Caco-2 (cell line): ENCODE measurements at regions of chr7 and their contacts with region 1.

Region 1: DNA sequence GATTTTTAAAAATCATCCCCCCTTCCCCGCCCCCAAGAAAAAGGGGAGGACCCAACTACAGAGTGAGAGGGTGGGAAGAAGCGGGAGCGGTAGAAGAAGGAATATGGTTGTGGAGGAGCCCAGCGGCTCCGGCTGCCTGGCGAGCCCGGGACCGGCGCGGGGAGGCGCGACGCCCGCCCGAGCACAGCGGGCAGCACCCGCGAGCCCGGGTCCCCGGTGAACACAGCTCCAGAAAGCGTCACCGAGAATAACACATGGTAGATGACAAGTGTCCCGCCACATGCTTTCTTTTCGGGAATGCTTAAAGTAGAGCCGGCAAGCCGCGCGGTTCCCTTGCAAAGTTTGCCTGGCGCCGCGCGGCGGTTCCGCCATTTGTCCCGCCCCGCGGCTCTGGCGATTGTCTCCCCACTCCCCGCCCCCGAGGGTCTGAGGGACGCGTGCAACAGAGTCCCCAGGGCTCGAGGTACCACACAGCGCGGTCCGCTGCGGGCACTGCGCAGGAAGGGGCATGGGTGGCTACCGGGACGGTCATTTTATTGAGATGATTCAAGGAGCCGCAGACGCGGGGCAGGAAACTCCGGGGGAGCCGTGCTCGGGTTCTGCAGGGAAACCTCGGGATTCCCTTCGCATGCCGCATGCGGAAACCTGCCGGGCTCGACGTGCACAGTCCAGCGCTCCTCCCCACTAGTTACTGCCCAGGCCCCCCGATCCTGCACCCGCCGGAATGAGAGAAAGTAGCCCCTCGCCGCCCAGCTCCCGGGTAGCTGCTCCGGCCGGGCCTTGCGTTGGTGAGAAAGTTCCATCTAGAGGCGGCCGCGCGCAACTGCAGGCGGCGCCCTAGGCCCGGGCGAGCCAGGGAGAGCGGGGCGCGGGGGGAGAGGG is 781 bp upstream of the GRM8 start:
- DNase-seq: peak; percentile 45 to 73
- H3K4me3 ChIP-seq: peak overlapping the region; percentile 51
- H3K4me3 Mint-ChIP-seq: peak overlapping the region; percentile 61
- H3K27ac Mint-ChIP-seq: no peak overlapping the region
- H3K4me1 ChIP-seq: peaks cover 8% of the 10 kb centered on the region; the same call in 1 of the 2 replicates
- H3K4me1 Mint-ChIP-seq: no peaks in the 10 kb centered on the region
- H3K27me3 ChIP-seq: peaks cover 12% of the 10 kb centered on the region
- H3K27me3 Mint-ChIP-seq: peaks cover 39% of the 10 kb centered on the region
- CTCF ChIP-seq: peak; percentile 87 to 88

Region 2: GRCh38 chr7:126856691-126857291 is 396.7 kb before region 1 on chr7:
- CTCF ChIA-PET with region 1: no interaction called
- POLR2A ChIA-PET with region 1: no interaction called
- intact Hi-C with region 1: loop called (anchors 2 kb)
- DNase-seq: peak in 1 of 2 experiments; percentile 12
- H3K4me3 ChIP-seq: no peak overlapping the region
- H3K4me3 Mint-ChIP-seq: no peak overlapping the region
- H3K27ac Mint-ChIP-seq: no peak overlapping the region
- H3K4me1 ChIP-seq: no peaks in the 10 kb centered on the region
- H3K4me1 Mint-ChIP-seq: no peaks in the 10 kb centered on the region
- H3K27me3 ChIP-seq: no peaks in the 10 kb centered on the region; the same call in 1 of the 2 replicates
- H3K27me3 Mint-ChIP-seq: peaks cover 6% of the 10 kb centered on the region
- CTCF ChIP-seq: peak; percentile 56 to 60

Region 3: DNA sequence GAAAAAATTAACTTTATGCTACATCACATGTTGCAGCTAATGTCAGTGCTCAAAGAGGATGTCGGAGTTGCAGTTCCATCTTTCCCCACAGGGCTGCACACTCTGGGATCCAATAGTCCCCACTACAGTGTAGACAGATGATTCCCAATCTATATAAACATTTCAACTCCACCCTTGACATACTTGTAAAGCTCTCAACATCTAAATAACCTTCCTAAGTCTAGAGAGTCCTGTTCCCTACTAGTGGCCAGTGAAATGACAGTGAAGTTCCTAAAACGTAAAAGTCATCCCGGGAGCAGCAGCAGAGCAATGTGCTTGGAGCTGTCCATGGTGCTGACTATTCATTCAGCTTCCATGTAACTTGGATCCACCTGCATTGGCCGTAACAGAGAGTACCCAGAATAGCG is 145.9 kb before region 1 on chr7:
- CTCF ChIA-PET with region 1: interaction called, 9 read pairs
- POLR2A ChIA-PET with region 1: no interaction called
- intact Hi-C with region 1: loop called (anchors 1 kb)
- DNase-seq: peak; percentile 62 to 76
- H3K4me3 ChIP-seq: no peak overlapping the region
- H3K4me3 Mint-ChIP-seq: no peak overlapping the region
- H3K27ac Mint-ChIP-seq: no peak overlapping the region
- H3K4me1 ChIP-seq: no peaks in the 10 kb centered on the region
- H3K4me1 Mint-ChIP-seq: no peaks in the 10 kb centered on the region
- H3K27me3 ChIP-seq: no peaks in the 10 kb centered on the region
- H3K27me3 Mint-ChIP-seq: peaks cover 6% of the 10 kb centered on the region
- CTCF ChIP-seq: peak; percentile 33 to 75

Region 4: DNA sequence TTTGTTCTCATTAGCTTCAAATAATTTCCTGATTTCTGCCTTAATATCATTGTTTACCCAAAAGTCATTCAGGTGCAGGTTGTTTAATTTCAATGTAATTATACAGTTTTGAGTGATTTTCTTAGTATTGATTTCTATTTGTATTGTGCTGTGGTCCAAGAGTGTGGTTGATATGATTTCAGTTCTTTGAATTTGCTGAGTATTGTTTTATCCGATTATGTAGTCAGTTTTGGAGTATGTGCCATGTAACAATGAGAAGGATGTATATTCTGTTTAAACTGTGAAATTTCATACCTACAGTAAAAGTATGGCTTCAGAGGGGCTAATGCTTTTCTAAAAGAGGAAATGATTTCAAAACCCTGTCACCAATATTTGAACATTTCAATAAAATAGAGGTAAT is 16.6 kb after region 1 on chr7:
- CTCF ChIA-PET with region 1: no interaction called
- POLR2A ChIA-PET with region 1: no interaction called
- intact Hi-C with region 1: no loop called
- DNase-seq: no peak
- H3K4me3 ChIP-seq: no peak overlapping the region
- H3K4me3 Mint-ChIP-seq: no peak overlapping the region
- H3K27ac Mint-ChIP-seq: no peak overlapping the region
- H3K4me1 ChIP-seq: no peaks in the 10 kb centered on the region
- H3K4me1 Mint-ChIP-seq: no peaks in the 10 kb centered on the region
- H3K27me3 ChIP-seq: no peaks in the 10 kb centered on the region
- H3K27me3 Mint-ChIP-seq: peaks cover 23% of the 10 kb centered on the region
- CTCF ChIP-seq: no peak

Region 5: GRCh38 chr7:127392566-127393367 is 139.2 kb after region 1 on chr7 and contains the start of gene ZNF800:
- CTCF ChIA-PET with region 1: no interaction called
- POLR2A ChIA-PET with region 1: no interaction called
- intact Hi-C with region 1: no loop called
- DNase-seq: peak; percentile 89 to 92
- H3K4me3 ChIP-seq: peak within 1 kb of the TSS; percentile 73
- H3K4me3 Mint-ChIP-seq: peak within 1 kb of the TSS; percentile 97
- H3K27ac Mint-ChIP-seq: peak within 1 kb of the TSS; percentile 93
- H3K4me1 ChIP-seq: no peaks in the 10 kb centered on the region
- H3K4me1 Mint-ChIP-seq: peaks cover 7% of the 10 kb centered on the region
- H3K27me3 ChIP-seq: no peaks in the 10 kb centered on the region
- H3K27me3 Mint-ChIP-seq: peaks cover 8% of the 10 kb centered on the region
- CTCF ChIP-seq: no peak
- total RNA-seq, gene ZNF800: 17.3 and 18.7 TPM in 2 replicates

Region 6: DNA sequence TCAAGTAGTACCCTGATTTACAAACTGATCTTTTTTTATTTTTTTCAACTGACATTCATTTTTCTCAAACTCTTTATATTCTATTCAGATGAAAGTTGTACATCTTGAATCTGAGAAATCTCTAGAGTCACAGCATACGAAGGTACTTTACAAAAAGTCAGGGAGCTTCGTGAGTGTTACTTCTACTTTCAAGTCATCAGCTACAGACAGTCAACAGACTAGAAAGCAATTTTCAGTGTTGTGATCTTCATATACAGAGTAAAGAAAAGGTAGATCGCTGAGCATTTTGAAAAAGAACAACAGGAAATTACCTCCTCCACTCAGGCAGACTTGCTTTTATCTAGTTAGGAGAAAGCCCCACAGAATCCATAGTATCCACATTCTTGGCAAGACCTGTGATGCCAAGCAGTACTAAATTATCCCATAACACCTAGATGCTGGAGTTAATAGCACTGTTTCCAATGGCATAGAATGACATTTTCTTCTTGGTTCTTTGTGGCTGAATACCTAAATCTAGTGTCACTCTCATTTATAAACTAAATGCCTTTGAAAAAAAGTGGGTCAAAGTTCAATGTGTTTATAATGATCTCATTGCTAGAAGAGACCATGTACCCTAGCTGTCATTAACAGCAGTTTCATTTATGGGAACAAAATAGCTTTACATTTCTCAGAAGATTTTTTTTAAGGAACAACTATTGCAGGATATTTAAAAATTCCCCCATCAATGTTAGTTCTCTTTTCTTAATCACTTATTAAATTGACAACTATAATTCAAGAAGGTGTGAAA is 151.0 kb after region 1 on chr7:
- CTCF ChIA-PET with region 1: no interaction called
- POLR2A ChIA-PET with region 1: no interaction called
- intact Hi-C with region 1: loop called (anchors 5 kb)
- DNase-seq: no peak
- H3K4me3 ChIP-seq: no peak overlapping the region
- H3K4me3 Mint-ChIP-seq: no peak overlapping the region
- H3K27ac Mint-ChIP-seq: no peak overlapping the region
- H3K4me1 ChIP-seq: no peaks in the 10 kb centered on the region
- H3K4me1 Mint-ChIP-seq: no peaks in the 10 kb centered on the region
- H3K27me3 ChIP-seq: no peaks in the 10 kb centered on the region
- H3K27me3 Mint-ChIP-seq: peaks cover 13% of the 10 kb centered on the region
- CTCF ChIP-seq: no peak